KBM-7 (cell line): ENCODE measurements at regions of chr11 and their contacts with region 1.

Region 1: GRCh38 chr11:108647701-108648527 is 17.0 kb upstream of the DDX10 start:
- DNase-seq: peak; percentile 82

Region 2: GRCh38 chr11:108135845-108136544 is 511.9 kb before region 1 on chr11:
- in situ Hi-C with region 1: loop called (anchors 25 kb)
- DNase-seq: no peak

Region 3: DNA sequence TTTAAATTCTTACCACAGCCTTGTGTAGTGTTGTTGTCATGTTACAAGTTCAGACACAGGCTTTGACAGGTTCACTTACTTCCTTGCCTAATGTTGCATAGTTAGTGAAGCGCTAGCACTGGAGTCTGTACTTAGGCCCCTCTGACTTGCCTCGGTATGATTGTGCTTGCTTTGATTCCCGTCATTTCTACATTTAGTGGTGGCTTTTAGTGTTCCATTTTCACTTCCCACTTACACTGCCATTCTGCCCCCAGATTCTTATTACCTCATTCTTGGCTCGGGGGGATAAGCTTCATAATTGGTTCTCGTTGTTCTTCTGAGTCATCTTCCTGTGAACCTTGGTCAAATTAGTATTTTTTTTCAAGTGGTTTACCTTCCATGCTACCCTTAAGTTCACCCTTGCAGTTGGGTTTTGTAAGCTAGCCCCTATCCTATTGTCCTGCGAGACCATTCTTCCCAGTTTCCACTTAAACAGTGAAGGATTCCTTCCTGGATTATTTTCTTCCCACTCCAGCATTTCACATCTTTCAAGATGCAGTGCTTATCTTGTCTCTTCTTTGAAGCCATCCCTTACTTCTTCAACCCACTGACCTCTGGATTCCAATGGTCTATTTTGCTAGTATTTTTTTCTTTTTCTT is 85.7 kb after region 1 on chr11:
- in situ Hi-C with region 1: no loop called
- DNase-seq: peak; percentile 61